AG04450 (cell line): ENCODE measurements at regions of chr17 and their contacts with region 1.

Region 1: DNA sequence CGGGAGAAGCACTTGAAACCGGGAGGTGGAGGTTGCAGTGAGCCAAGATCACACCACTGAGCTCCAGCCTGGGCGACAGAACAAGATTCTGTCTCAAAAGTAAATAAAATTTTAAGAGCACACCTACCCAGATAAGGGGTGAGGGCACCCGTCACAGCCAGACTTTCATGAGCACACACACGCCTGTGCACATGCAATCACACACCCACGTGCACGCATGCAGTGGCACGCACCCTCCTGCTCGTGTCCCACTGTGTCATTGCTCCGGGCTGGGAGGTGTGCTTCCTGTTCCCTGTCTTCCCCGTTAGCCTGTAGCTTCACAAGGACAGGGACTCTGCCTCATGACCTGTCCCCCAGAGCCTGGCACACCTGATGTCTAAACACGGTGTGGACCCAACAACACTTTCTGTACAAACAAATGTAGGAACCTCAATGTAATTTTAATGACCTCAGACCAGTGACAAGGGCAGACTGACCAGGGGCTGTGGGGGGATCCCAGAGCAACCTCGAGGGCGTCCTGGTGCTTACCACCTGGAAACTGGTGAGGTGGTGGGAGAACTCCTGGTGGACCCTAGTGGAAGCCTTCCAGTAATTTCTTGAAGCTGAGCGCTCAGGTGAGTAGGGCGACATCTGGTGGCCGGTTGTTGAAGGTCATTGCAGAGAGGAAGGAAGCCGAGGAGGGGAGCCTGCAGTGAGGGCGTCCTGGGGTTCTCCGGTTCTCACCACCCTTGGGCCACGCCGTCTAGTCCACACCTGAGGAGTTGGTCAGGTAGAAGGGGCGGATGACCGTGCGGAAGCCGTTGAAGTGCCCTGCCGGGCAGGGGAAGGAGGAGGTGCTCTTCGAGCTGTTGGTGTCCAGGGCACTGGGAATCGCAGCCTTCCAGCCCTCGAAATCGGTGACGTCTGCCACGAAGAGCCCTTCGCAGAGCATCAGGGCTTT is 8.6 kb downstream of the LGALS3BP start:
- DNase-seq: peak; percentile 37
- H3K4me3 ChIP-seq: no peak overlapping the region
- H3K27ac ChIP-seq: no peak overlapping the region
- H3K27me3 ChIP-seq: no peaks in the 10 kb centered on the region
- CTCF ChIP-seq: peak; percentile 85

Region 2: DNA sequence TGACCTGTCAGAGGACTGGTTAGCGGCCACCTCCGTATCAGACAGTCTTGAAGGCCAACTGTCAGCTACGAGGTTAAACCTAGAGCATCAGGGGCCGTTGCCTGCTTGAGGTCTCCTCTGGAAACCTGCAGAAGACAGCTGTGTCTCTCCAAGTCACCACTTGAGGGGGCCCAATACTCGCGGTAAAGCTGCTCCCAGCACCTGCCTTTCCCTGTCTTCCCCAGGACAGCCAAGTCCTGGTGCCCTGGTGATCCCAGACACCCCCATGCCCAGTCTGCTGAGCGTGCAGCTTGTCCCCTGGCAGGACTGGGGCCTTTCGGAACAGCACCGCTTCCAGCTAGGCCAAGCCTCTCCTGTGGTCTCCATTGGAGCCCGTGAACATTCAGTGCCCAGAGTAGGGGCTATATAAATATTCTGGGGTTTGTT is 474.0 kb before region 1 on chr17:
- CTCF ChIA-PET with region 1: interaction called, 11 read pairs
- POLR2A ChIA-PET with region 1: no interaction called
- DNase-seq: peak; percentile 38
- H3K4me3 ChIP-seq: no peak overlapping the region
- H3K27ac ChIP-seq: no peak overlapping the region
- H3K27me3 ChIP-seq: no peaks in the 10 kb centered on the region
- CTCF ChIP-seq: peak; percentile 80

Region 3: GRCh38 chr17:78674595-78675315 is 296.3 kb before region 1 on chr17:
- CTCF ChIA-PET with region 1: no interaction called
- POLR2A ChIA-PET with region 1: no interaction called
- DNase-seq: no peak
- H3K4me3 ChIP-seq: no peak overlapping the region
- H3K27ac ChIP-seq: no peak overlapping the region
- H3K27me3 ChIP-seq: no peaks in the 10 kb centered on the region
- CTCF ChIP-seq: no peak

Region 4: DNA sequence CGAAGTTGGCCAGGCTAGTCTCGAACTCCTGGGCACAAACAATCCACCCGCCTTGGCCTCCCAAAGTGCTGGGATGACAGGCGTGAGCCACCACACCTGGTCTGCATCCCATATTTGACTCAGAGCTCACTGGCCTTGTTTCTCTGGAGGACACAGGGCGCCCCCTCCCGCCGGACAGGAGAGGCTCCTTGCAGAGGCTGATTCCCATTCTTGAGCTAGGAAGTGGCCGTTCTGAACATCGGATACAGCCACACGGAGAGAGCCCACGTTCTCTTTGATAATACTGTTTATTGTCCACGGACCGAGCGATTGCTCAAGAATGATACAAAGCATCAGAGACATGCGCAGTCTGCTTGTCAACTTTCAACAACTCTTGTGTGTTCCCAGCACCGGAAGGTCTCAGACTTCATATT is 118.4 kb before region 1 on chr17:
- CTCF ChIA-PET with region 1: interaction called, 13 read pairs
- POLR2A ChIA-PET with region 1: interaction called, 6 read pairs
- DNase-seq: no peak
- H3K4me3 ChIP-seq: no peak overlapping the region
- H3K27ac ChIP-seq: peak overlapping the region; percentile 31
- H3K27me3 ChIP-seq: no peaks in the 10 kb centered on the region
- CTCF ChIP-seq: peak; percentile 41

Region 5: GRCh38 chr17:78865682-78866390 is 105.3 kb before region 1 on chr17:
- CTCF ChIA-PET with region 1: interaction called, 30 read pairs
- POLR2A ChIA-PET with region 1: interaction called, 3 read pairs
- DNase-seq: peak; percentile 63
- H3K4me3 ChIP-seq: no peak overlapping the region
- H3K27ac ChIP-seq: peak overlapping the region; percentile 3
- H3K27me3 ChIP-seq: no peaks in the 10 kb centered on the region
- CTCF ChIP-seq: peak; percentile 92

Region 6: DNA sequence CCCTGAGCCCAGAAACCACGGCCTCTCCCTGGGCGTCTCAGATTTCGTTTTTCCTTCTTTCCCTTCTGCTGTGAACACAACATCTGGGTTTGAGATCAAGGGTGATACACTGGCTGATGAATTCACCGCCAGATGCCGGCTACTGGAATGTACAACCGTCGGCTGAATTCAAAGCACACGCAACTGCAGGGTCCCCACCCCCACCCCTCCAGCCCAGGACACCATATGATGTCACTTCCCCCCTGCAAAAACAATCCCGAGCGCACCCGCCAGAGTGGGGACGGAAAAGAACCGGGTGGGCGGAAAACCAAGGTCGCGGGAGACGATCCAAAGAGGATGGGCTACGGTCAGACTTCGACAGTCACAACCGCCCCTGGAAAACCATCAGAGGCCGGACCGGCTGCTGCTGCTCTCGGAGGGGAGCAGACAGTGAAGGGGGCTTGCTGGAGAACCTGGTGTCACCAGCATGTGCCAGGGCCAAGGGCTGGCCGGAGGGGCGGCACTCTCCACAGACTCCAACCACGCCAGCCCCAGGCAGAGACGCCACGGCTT is 91.4 kb before region 1 on chr17:
- CTCF ChIA-PET with region 1: interaction called, 11 read pairs
- POLR2A ChIA-PET with region 1: interaction called, 3 read pairs
- DNase-seq: peak; percentile 92
- H3K4me3 ChIP-seq: peak overlapping the region; percentile 38
- H3K27ac ChIP-seq: peak overlapping the region; percentile 97
- H3K27me3 ChIP-seq: no peaks in the 10 kb centered on the region
- CTCF ChIP-seq: no peak

Region 7: GRCh38 chr17:78953356-78954265 is 17.5 kb before region 1 on chr17:
- CTCF ChIA-PET with region 1: interaction called, 18 read pairs
- POLR2A ChIA-PET with region 1: no interaction called
- DNase-seq: no peak
- H3K4me3 ChIP-seq: no peak overlapping the region
- H3K27ac ChIP-seq: no peak overlapping the region
- H3K27me3 ChIP-seq: no peaks in the 10 kb centered on the region
- CTCF ChIP-seq: no peak

Region 8: GRCh38 chr17:78960928-78961327 is 10.2 kb before region 1 on chr17:
- CTCF ChIA-PET with region 1: interaction called, 18 read pairs
- POLR2A ChIA-PET with region 1: interaction called, 3 read pairs
- DNase-seq: no peak
- H3K4me3 ChIP-seq: no peak overlapping the region
- H3K27ac ChIP-seq: no peak overlapping the region
- H3K27me3 ChIP-seq: no peaks in the 10 kb centered on the region
- CTCF ChIP-seq: no peak